Activated CD8-positive, alpha-beta memory T cell treated with anti-CD3 and anti-CD28 coated beads, Interleukin-2, amount 10 ng/mL, durations not matched to agents 7 days and 5 days (primary cell): ENCODE measurements at regions of chr1 and their contacts with region 1.

Region 1: GRCh38 chr1:225474986-225475820 is 47.4 kb upstream of the LBR start:
- DNase-seq: peak; percentile 67
- ATAC-seq: peak; percentile 79
- H3K4me3 Mint-ChIP-seq: no peak overlapping the region
- H3K27ac Mint-ChIP-seq: no peak overlapping the region
- H3K4me1 Mint-ChIP-seq: peaks cover 34% of the 10 kb centered on the region
- H3K27me3 Mint-ChIP-seq: peaks cover 5% of the 10 kb centered on the region

Region 2: DNA sequence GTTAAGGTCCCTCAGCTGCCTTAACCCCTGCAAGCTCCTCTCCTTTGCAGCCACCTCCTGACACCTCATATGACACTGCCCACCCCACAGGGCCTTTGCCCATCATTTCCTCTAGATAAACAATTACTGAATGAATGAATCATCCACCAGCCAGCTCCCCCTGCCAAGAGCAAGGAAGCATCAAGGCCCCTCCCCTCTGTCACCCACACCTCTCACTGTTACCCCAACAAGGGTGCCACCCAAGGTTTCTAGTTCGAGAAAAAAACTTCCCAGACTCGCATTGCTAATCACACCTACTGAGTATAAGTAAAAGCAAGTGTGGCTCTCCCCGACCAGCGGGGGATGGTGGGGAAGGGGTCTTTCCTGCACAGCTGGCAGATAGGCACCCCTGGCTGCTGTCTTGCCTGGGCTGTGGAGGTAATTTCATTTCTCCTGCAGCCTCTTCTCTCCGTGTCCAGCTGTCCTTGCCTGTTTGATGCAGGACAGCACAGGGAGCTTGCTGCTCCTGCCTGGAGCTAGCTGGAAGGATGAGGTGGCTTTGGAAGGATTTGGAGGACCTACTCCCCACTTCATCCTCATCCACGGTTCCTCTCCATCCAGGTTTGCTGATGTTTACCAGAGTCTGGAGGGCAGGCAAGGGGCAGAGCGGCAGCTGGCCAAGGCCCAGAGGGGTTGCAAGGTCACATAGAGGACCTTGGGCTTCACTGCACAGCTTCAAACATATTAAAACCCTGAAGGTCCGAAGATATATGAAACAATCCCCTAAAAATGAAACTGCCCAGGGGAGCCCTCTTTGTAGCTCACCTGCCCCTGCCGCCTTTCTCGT is 14.3 kb before region 1 on chr1:
- CTCF ChIA-PET with region 1: interaction called, 18 read pairs
- DNase-seq: peak; percentile 77
- ATAC-seq: peak; percentile 84
- H3K4me3 Mint-ChIP-seq: no peak overlapping the region
- H3K27ac Mint-ChIP-seq: peak overlapping the region; percentile 87
- H3K4me1 Mint-ChIP-seq: peaks cover 58% of the 10 kb centered on the region
- H3K27me3 Mint-ChIP-seq: no peaks in the 10 kb centered on the region

Region 3: GRCh38 chr1:225881969-225882693 is 406.9 kb after region 1 on chr1 and contains the start of gene TMEM63A:
- CTCF ChIA-PET with region 1: interaction called, 10 read pairs
- DNase-seq: peak; percentile 92
- ATAC-seq: peak; percentile 87
- H3K4me3 Mint-ChIP-seq: peak within 1 kb of the TSS; percentile 82
- H3K27ac Mint-ChIP-seq: peak within 1 kb of the TSS; percentile 87
- H3K4me1 Mint-ChIP-seq: peaks cover 35% of the 10 kb centered on the region
- H3K27me3 Mint-ChIP-seq: peaks cover 5% of the 10 kb centered on the region
- total RNA-seq, gene TMEM63A: 50.4 to 58.7 TPM

Region 4: DNA sequence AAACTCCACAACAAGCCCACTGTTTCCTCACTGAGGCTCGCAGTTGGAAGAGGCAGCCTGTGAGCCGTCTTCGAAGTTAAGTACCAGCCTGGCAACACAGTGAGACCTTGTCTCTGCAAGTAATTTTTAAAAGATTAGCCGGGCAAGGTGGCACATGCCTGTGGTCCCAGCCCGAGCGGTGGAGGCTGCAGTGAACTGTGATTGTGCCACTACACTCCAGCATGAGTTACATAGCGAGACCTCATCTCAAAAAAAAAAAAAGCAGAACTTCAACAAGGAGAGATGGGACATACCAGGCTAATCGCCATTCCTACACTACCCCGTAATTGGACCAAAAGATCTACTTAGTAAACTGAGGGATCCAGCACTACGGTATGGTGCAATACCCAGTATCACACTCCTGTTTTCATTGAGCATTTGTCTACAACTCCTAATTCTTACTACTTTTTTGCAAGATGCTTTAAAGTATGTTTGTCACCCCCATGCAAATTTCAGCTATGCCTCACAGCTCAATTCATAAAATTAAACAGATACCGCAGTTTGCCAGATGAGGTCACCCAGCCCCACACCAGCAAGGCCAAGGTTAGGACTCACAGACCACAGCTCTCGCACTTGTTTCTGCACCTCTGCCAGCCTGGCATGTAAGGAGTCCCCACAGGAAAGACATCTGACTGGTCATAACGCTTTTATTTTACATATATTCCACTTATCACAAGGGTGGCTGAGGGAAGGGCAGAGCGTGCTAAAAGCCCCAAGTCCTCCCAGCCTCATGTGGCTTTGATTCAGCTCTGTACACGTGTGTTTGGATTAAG is 502.9 kb after region 1 on chr1:
- CTCF ChIA-PET with region 1: interaction called, 49 read pairs
- DNase-seq: peak; percentile 37
- ATAC-seq: no peak
- H3K4me3 Mint-ChIP-seq: no peak overlapping the region
- H3K27ac Mint-ChIP-seq: no peak overlapping the region
- H3K4me1 Mint-ChIP-seq: peaks cover 21% of the 10 kb centered on the region
- H3K27me3 Mint-ChIP-seq: no peaks in the 10 kb centered on the region